Heart left ventricle (tissue), 16 donors: ENCODE measurements at regions of chr7 and their contacts with region 1.

Region 1: GRCh38 chr7:138459413-138460175 is 465 bp upstream of the TRIM24 start:
- DNase-seq: no peak
- ATAC-seq: peak; percentile 97 to 98 (median 98)
- H3K4me3 ChIP-seq: peak overlapping the region in 11 of 12 donors; percentile 72 to 98 (median 88)
- H3K27ac ChIP-seq: peak overlapping the region in 7 of 12 donors; percentile 41 to 98 (median 94)
- H3K4me1 ChIP-seq: peaks cover 0 to 14% (median 7%) of the 10 kb centered on the region in 12 donors
- H3K27me3 ChIP-seq: no peaks in the 10 kb centered on the region
- CTCF ChIP-seq: peak in 6 of 12 donors; percentile 17 to 51 (median 23)
- POLR2A ChIP-seq: no peak

Region 2: DNA sequence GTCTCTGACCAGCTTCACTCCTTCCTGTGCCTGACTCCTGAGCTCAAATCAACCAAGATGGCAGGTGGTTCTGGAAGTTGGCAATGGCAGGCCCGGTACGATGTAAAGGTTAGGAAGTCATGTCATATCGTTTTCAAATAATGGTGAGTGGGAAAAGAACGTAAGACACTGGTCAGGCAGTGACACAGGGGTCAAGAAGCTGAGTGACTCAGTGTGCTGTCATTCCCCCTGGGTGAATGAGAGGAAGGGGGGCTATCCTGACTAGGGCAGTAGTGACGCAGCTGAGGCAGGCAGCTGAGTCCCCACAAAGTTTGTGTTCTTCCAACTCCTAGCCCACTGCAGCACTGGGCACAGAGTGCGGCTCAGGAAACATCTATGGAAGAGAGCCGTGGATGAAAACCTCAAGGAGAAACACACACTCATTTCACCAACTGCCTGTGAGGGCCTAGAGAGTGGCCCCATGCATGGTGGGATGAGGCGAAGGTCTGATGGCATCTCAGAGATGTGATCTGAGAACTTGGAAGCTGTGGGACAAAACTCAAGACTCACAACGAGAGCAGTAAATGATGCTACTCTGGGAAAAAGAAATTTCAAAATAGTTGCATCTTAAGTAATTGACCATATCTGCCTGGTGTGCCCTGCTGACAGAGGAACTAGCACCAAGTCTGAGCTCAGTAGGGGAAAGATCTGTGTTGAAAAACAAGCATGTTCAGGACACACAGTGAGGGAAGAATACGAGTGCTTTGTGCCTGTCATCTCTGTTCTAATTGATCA is 480.9 kb before region 1 on chr7:
- intact Hi-C with region 1: no loop called
- DNase-seq: peak in 4 of 5 donors; percentile 57 to 80 (median 72)
- ATAC-seq: peak; percentile 65 to 87 (median 86)
- H3K4me3 ChIP-seq: no peak overlapping the region
- H3K27ac ChIP-seq: peak overlapping the region in 11 of 12 donors; percentile 23 to 78 (median 68)
- H3K4me1 ChIP-seq: peaks cover 4 to 92% (median 66%) of the 10 kb centered on the region in 12 donors
- H3K27me3 ChIP-seq: no peaks in the 10 kb centered on the region
- CTCF ChIP-seq: no peak
- POLR2A ChIP-seq: no peak

Region 3: GRCh38 chr7:138002096-138002827 is 457.3 kb before region 1 on chr7:
- intact Hi-C with region 1: loop called in 1 of 10 experiments (anchors 5 kb)
- DNase-seq: peak; percentile 99
- ATAC-seq: peak; percentile 96 to 98 (median 98)
- H3K4me3 ChIP-seq: peak overlapping the region; percentile 70 to 99 (median 81)
- H3K27ac ChIP-seq: peak overlapping the region in 11 of 12 donors; percentile 86 to 97 (median 92)
- H3K4me1 ChIP-seq: peaks cover 0 to 37% (median 31%) of the 10 kb centered on the region in 12 donors
- H3K27me3 ChIP-seq: no peaks in the 10 kb centered on the region
- CTCF ChIP-seq: peak; percentile 87 to 98 (median 93)
- POLR2A ChIP-seq: no peak

Region 4: GRCh38 chr7:138161600-138162081 is 298.0 kb before region 1 on chr7:
- intact Hi-C with region 1: loop called in 1 of 10 experiments (anchors 5 kb)
- DNase-seq: peak in 4 of 5 donors; percentile 80 to 88 (median 83)
- ATAC-seq: peak in 3 of 4 donors; percentile 79 to 93 (median 86)
- H3K4me3 ChIP-seq: no peak overlapping the region
- H3K27ac ChIP-seq: no peak overlapping the region
- H3K4me1 ChIP-seq: no peaks in the 10 kb centered on the region
- H3K27me3 ChIP-seq: no peaks in the 10 kb centered on the region
- CTCF ChIP-seq: peak; percentile 51 to 83 (median 68)
- POLR2A ChIP-seq: no peak

Region 5: DNA sequence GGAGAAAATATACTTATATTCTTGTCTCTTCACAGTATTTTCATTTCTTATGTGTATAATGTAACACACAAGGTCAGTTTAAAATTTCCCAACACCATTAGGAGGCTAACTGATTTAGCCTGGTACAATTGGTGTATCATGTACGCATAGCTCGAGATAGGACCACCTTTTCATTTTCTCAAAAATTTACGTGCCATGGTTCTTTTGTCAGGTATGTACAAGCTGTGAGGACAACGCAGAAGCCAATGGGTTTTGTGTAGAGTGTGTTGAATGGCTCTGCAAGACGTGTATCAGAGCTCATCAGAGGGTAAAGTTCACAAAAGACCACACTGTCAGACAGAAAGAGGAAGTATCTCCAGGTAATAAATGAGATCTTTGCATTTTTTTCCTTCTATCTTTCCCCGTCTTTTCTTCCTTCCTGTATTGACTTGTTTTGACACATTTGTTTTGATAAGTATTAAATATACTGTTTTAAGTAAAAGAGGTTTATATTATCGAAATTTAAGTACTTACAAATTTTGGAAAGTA is 55.5 kb after region 1 on chr7:
- intact Hi-C with region 1: loop called in 1 of 10 experiments (anchors 10 kb)
- DNase-seq: no peak
- ATAC-seq: no peak
- H3K4me3 ChIP-seq: no peak overlapping the region
- H3K27ac ChIP-seq: no peak overlapping the region
- H3K4me1 ChIP-seq: peaks cover 0 to 17% (median 5%) of the 10 kb centered on the region in 12 donors
- H3K27me3 ChIP-seq: no peaks in the 10 kb centered on the region
- CTCF ChIP-seq: no peak
- POLR2A ChIP-seq: no peak

Region 6: GRCh38 chr7:138542183-138542582 is 82.6 kb after region 1 on chr7:
- intact Hi-C with region 1: loop called in 1 of 10 experiments (anchors 10 kb)
- DNase-seq: no peak
- ATAC-seq: no peak
- H3K4me3 ChIP-seq: no peak overlapping the region
- H3K27ac ChIP-seq: no peak overlapping the region
- H3K4me1 ChIP-seq: peaks cover 0 to 3% (median 0%) of the 10 kb centered on the region in 12 donors
- H3K27me3 ChIP-seq: no peaks in the 10 kb centered on the region
- CTCF ChIP-seq: no peak
- POLR2A ChIP-seq: no peak

Region 7: DNA sequence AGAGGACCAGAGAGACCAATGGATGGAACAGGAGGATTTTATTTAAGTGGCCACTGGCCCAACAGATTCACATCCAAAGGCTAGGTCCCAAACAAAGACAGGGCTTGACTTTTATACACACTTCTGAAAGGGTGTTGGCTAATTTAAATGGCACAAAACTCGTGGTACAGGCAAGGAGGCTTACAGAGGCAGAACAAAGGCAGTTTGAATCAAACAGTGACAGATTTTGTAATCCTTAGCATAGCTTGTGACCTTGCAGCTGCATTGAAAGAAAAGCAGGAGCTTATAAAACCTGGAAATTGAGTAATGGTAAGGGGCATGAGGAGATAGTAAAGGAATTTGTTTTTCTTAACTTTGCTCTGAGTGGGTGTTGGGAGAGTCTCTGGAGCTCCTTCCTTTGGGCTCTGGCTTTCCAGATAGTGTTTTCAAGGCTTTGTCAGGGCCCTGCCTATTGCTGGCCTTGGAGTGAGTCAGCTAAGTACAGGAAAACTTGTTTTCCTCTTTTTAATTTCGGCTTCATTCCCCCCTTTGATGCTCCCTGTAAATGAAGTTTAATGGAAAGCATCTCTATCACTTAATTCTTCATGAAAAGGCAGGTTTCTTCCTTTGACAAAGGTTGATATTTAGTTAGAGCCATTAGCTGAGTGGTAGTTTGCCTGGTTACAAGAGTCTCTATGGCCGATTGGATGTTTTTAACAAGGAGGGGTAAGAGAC is 97.3 kb after region 1 on chr7:
- intact Hi-C with region 1: loop called in 2 of 10 experiments (anchors 10 kb)
- DNase-seq: no peak
- ATAC-seq: no peak
- H3K4me3 ChIP-seq: no peak overlapping the region
- H3K27ac ChIP-seq: no peak overlapping the region
- H3K4me1 ChIP-seq: no peaks in the 10 kb centered on the region
- H3K27me3 ChIP-seq: no peaks in the 10 kb centered on the region
- CTCF ChIP-seq: no peak
- POLR2A ChIP-seq: no peak